ENCODE measurements at regions of chr10 and their contacts with region 1.

Region 1: DNA sequence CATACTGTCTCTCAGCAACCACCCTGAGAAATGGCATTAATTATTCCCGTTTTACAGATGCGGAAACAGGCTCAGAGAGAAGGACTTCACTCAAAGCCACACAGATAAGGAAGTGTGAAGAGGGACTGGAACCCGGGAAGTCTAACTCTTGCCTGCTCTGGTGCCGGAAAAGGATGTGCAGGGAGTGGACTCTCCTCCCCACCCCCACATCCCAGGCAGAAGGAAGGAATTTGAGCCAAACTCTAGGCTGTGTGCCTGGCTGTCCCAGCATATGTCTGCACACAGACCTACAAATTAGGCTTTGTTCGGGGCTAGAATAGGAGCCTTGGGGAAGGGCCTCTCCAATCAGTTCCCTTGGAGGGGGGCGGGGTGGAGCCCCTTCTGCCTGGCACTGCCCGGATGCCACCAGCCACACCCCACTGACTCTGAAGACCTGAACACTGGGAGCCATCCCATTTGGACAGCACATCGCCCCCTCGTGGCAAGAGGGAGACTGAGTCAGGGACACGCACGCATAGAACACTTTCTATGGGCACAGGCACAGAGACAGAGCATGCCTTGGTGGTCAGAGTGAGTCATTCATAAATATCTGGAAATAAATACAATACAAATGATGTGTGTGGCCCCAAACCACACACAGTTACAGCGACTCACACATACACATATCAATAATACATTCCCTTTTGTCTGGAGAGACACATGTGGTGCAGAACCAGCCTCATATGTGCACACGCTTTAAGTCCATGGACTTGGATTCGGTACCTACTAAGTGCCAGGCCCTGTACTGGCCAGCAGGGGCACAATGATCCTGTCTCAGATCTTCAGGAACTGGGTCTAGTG is 13.1 kb downstream of the LZTS2 start:
- DNase-seq: peak; percentile 73 to 96
- H3K4me3 ChIP-seq: no peak overlapping the region
- H3K27ac ChIP-seq: peak overlapping the region; percentile 22 to 55
- H3K4me1 ChIP-seq: peaks cover 9 to 10% of the 10 kb centered on the region in 2 donors
- H3K27me3 ChIP-seq: no peaks in the 10 kb centered on the region
- CTCF ChIP-seq: peak; percentile 77 to 83 (median 78)

Region 2: DNA sequence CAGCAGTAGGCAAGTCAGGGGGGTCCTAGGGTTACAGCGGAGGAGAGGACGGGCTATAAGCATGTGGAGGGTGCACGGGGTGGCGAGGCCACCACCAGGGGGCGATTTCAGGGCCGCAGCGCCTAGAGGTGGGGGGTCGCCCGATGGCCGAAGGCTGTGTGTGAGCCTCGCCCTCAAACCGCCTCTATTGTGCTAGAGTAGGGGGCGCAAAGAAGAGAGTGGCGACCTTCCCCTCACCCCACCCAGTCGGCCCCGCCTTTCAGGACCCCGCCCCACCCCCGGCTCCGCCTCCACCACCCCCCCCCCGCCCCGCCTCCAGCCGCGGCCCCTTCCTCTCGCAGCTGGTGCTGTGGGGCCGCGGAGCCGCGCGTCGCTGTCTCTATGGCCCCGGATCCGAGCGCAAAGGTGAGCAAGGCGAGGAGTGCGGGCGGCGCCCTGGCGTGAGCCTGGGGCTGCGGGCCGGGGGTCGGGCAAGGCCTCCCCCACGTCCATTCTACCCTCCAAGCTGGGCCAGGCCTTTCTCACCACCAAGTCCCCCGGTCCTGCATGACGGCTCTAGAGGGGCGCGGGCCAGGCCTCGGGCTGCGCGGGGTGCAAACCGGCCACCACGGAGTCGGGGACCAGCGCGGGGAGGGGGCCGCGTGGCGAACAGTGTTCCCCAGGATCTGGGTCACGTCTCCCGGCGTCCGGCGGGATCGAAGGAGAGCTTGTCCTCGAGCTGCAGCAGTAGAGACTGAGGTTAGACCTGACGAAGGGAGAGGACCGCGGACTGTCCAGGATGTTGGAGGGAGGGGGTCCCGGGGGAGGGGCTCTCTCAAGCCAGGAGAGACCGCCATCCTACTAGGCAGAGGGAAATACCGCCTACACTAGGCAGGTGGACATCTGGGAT is 43.3 kb before region 1 on chr10 and contains the start of gene SEMA4G:
- intact Hi-C with region 1: loop called (anchors 1 kb)
- DNase-seq: peak in 1 of 2 donors; percentile 67
- H3K4me3 ChIP-seq: peak within 1 kb of the TSS; percentile 62 to 74
- H3K27ac ChIP-seq: peak within 1 kb of the TSS; percentile 30 to 39
- H3K4me1 ChIP-seq: peaks cover 8 to 9% of the 10 kb centered on the region in 2 donors
- H3K27me3 ChIP-seq: no peaks in the 10 kb centered on the region
- CTCF ChIP-seq: peak; percentile 58 to 78 (median 72)
- total RNA-seq, gene SEMA4G: 2.1 TPM

Region 3: DNA sequence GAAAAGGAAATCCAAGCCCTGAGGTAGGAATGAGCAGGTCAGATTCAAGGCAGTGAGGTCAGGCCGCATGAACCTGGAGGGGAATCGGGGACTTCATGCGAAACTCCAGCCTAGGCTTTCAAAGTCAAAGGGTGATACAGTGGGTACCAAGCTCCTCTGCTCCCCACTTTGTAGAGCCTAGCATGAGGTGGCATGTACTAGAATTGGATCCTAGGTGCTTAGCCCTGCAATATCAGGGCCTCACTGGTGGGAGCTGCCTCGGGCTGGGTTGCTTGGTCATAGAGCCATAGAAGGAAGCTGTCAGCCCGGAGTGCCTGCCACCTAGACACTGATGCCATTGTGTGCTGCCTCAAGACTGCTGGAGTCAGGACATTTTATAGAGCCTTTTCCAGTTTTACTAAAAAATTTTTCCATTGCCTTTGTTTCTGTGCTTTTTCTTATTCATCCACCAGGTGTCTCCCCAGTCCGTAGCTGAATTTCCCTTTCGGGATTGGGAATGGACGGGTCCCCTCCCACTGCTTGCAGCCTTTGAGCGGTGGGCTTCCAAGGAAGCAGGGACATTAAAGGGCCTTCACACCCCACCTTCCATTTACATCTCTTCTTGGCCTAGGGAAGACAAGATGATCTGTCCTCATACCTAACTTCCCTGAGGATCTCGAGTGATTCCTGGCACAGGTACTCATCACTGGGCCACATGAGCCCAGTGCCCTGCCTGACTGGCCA is 18.6 kb before region 1 on chr10:
- intact Hi-C with region 1: loop called (anchors 1 kb)
- DNase-seq: no peak
- H3K4me3 ChIP-seq: no peak overlapping the region
- H3K27ac ChIP-seq: no peak overlapping the region
- H3K4me1 ChIP-seq: peaks cover 7 to 15% of the 10 kb centered on the region in 2 donors
- H3K27me3 ChIP-seq: no peaks in the 10 kb centered on the region
- CTCF ChIP-seq: peak; percentile 62 to 75 (median 64)